T-cell (primary cell): ENCODE measurements at regions of chr20 and their contacts with region 1.

Region 1: GRCh38 chr20:43420192-43420591 is 37.5 kb upstream of the SRSF6 start:
- DNase-seq: no peak
- ATAC-seq: no peak
- H3K4me3 ChIP-seq: no peak overlapping the region
- H3K4me3 Mint-ChIP-seq: no peak overlapping the region
- H3K27ac ChIP-seq: no peak overlapping the region
- H3K27ac Mint-ChIP-seq: no peak overlapping the region
- H3K4me1 ChIP-seq: no peaks in the 10 kb centered on the region
- H3K4me1 Mint-ChIP-seq: no peaks in the 10 kb centered on the region
- H3K27me3 ChIP-seq: peaks cover 0 to 27% of the 10 kb centered on the region in 2 experiments
- H3K27me3 Mint-ChIP-seq: peaks cover 16 to 26% of the 10 kb centered on the region in 2 donors

Region 2: DNA sequence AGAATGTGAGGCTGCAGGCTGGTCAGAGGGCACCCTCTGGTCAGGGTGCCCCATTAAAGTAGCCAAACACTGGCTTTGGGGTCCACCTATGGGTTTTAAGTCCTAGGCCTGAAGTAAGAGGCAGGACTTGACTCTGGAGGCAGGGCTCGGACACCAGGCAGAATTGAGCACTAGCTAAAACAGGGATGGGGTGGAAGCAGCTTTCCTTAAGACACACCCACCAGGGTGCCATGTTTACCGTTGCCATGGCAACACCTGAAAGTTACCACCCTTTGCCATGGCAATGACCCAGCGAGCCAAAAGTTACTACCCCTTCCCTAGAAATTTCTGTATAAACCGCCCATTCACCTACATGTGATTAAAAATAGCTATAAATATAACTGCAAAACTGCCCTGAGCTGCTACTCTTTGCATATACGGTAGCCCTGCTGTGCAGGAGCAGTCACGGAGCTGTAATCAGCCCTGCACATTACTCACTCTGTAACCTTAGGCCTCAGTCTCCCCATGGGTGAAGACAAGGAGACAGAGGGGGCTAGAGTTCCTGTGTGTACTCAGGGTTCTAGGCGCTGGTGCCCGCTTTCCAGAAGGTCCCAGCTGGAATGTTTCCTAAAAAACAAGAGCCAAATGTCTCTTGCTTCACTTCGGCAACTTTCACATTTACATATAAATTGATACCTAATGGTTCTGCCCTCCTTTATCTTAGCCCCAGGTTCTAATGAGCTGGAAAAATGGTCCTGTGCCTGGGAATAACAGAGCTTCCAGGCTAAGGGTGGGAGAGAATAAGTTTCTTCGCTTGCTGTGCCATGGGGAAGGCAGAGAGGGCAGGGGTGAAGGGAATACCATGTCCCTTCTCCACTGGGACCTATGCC is 10.3 kb after region 1 on chr20:
- CTCF ChIA-PET with region 1: interaction called in 1 of 2 experiments, 13 read pairs
- POLR2A ChIA-PET with region 1: no interaction called
- DNase-seq: no peak
- ATAC-seq: no peak
- H3K4me3 ChIP-seq: no peak overlapping the region
- H3K4me3 Mint-ChIP-seq: no peak overlapping the region
- H3K27ac ChIP-seq: no peak overlapping the region
- H3K27ac Mint-ChIP-seq: no peak overlapping the region
- H3K4me1 ChIP-seq: no peaks in the 10 kb centered on the region
- H3K4me1 Mint-ChIP-seq: no peaks in the 10 kb centered on the region
- H3K27me3 ChIP-seq: peaks cover 0 to 14% of the 10 kb centered on the region in 2 experiments
- H3K27me3 Mint-ChIP-seq: peaks cover 28 to 32% of the 10 kb centered on the region in 2 donors

Region 3: GRCh38 chr20:43456809-43457639 is 36.8 kb after region 1 on chr20:
- CTCF ChIA-PET with region 1: no interaction called
- POLR2A ChIA-PET with region 1: no interaction called
- DNase-seq: peak in 32 of 35 experiments; percentile 78 to 92 (median 85)
- ATAC-seq: peak; percentile 79 to 82 (median 80)
- H3K4me3 ChIP-seq: peak overlapping the region; percentile 90 to 98
- H3K4me3 Mint-ChIP-seq: peak overlapping the region; percentile 88 to 97 (median 92)
- H3K27ac ChIP-seq: peak overlapping the region; percentile 100
- H3K27ac Mint-ChIP-seq: peak overlapping the region; percentile 95 to 98
- H3K4me1 ChIP-seq: peaks cover 13 to 18% of the 10 kb centered on the region in 2 experiments
- H3K4me1 Mint-ChIP-seq: peaks cover 35 to 37% (median 37%) of the 10 kb centered on the region in 3 donors
- H3K27me3 ChIP-seq: peaks cover 0 to 18% of the 10 kb centered on the region in 2 experiments
- H3K27me3 Mint-ChIP-seq: peaks cover 4 to 14% of the 10 kb centered on the region in 2 donors